Kidney (tissue), 22 donors: ENCODE measurements at regions of chr7 and their contacts with region 1.

Region 1: GRCh38 chr7:134448700-134449229 is 10.1 kb downstream of the AKR1B1 start:
- DNase-seq: no peak
- H3K4me3 ChIP-seq: no peak overlapping the region
- H3K27ac ChIP-seq: no peak overlapping the region
- H3K4me1 ChIP-seq: peaks cover 0 to 13% (median 13%) of the 10 kb centered on the region in 3 donors
- H3K27me3 ChIP-seq: no peaks in the 10 kb centered on the region
- CTCF ChIP-seq: no peak

Region 2: GRCh38 chr7:134491963-134492362 is 43.2 kb after region 1 on chr7:
- intact Hi-C with region 1: loop called (anchors 10 kb)
- DNase-seq: peak in 1 of 5 donors; percentile 6
- H3K4me3 ChIP-seq: no peak overlapping the region
- H3K27ac ChIP-seq: no peak overlapping the region
- H3K4me1 ChIP-seq: no peaks in the 10 kb centered on the region
- H3K27me3 ChIP-seq: no peaks in the 10 kb centered on the region
- CTCF ChIP-seq: no peak

Region 3: GRCh38 chr7:134605973-134606923 is 157.5 kb after region 1 on chr7:
- intact Hi-C with region 1: loop called (anchors 10 kb)
- DNase-seq: peak in 4 of 5 donors; percentile 51 to 77 (median 62)
- H3K4me3 ChIP-seq: no peak overlapping the region
- H3K27ac ChIP-seq: no peak overlapping the region
- H3K4me1 ChIP-seq: peaks cover 0 to 2% (median 0%) of the 10 kb centered on the region in 3 donors
- H3K27me3 ChIP-seq: no peaks in the 10 kb centered on the region
- CTCF ChIP-seq: peak; percentile 86

Region 4: GRCh38 chr7:134720091-134720935 is 271.5 kb after region 1 on chr7:
- intact Hi-C with region 1: no loop called
- DNase-seq: peak in 2 of 5 donors; percentile 57 to 77
- H3K4me3 ChIP-seq: no peak overlapping the region
- H3K27ac ChIP-seq: peak overlapping the region in 1 of 2 donors; percentile 16
- H3K4me1 ChIP-seq: peaks cover 0 to 3% (median 2%) of the 10 kb centered on the region in 3 donors
- H3K27me3 ChIP-seq: no peaks in the 10 kb centered on the region
- CTCF ChIP-seq: no peak